ENCODE measurements at regions of chr17 and their contacts with region 1.

Region 1: GRCh38 chr17:559551-560431 is 154.8 kb downstream of the VPS53 start:
- DNase-seq: peak; percentile 42 to 88 (median 77)
- H3K4me3 ChIP-seq: no peak overlapping the region
- H3K27ac ChIP-seq: peak overlapping the region; percentile 69 to 93 (median 86)
- H3K4me1 ChIP-seq: peaks cover 31 to 42% of the 10 kb centered on the region in 2 donors
- H3K27me3 ChIP-seq: no peaks in the 10 kb centered on the region
- CTCF ChIP-seq: no peak
- POLR2A ChIP-seq: no peak

Region 2: GRCh38 chr17:661509-661908 is 101.7 kb after region 1 on chr17:
- intact Hi-C with region 1: no loop called
- DNase-seq: no peak
- H3K4me3 ChIP-seq: no peak overlapping the region
- H3K27ac ChIP-seq: no peak overlapping the region
- H3K4me1 ChIP-seq: no peaks in the 10 kb centered on the region
- H3K27me3 ChIP-seq: no peaks in the 10 kb centered on the region
- CTCF ChIP-seq: no peak
- POLR2A ChIP-seq: no peak

Region 3: GRCh38 chr17:693791-694638 is 134.2 kb after region 1 on chr17:
- intact Hi-C with region 1: loop called in 1 of 2 experiments (anchors 10 kb)
- DNase-seq: no peak
- H3K4me3 ChIP-seq: no peak overlapping the region
- H3K27ac ChIP-seq: peak overlapping the region in 3 of 5 donors; percentile 24 to 43 (median 28)
- H3K4me1 ChIP-seq: peaks cover 4 to 14% of the 10 kb centered on the region in 2 donors
- H3K27me3 ChIP-seq: no peaks in the 10 kb centered on the region
- CTCF ChIP-seq: no peak
- POLR2A ChIP-seq: peak in 1 of 2 donors; percentile 10